Motor neuron (in vitro differentiated cells): ENCODE measurements at regions of chr12 and their contacts with region 1.

Region 1: DNA sequence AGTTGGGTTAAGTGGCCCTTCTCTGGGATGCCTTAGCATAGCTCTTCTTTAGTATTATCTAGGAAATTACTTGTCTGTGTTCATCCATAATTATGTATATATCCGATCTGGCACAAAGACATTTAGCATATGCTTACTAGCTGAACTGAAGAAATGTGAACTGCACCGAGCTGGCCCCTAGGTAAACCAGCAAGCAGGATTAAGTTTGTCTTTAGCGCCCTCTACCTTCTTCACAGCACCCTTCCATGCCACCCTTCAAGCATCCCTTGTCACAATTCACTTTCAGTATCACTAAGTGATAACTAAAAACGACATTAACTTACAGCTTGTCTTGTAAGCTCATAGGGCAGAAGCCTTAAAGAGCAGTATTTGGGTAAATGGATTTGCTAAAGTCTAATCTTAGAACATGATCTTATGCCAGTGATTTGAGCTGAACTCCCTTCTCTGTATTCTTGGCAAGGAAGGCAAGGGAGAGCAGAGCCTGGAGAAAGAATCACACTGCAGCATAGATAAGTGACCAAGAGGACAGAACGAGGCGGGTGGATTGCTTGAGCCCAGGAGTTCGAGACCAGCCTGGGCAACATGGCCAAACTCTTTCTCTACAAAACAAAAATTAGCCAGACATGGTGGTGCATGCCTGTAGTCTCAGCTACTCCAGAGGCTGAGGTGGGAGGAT is 2.6 kb upstream of the HAL start:
- ATAC-seq: peak; percentile 86 to 99 (median 94)
- H3K4me3 ChIP-seq: no peak overlapping the region
- H3K27ac ChIP-seq: no peak overlapping the region
- H3K4me1 ChIP-seq: no peaks in the 10 kb centered on the region

Region 2: DNA sequence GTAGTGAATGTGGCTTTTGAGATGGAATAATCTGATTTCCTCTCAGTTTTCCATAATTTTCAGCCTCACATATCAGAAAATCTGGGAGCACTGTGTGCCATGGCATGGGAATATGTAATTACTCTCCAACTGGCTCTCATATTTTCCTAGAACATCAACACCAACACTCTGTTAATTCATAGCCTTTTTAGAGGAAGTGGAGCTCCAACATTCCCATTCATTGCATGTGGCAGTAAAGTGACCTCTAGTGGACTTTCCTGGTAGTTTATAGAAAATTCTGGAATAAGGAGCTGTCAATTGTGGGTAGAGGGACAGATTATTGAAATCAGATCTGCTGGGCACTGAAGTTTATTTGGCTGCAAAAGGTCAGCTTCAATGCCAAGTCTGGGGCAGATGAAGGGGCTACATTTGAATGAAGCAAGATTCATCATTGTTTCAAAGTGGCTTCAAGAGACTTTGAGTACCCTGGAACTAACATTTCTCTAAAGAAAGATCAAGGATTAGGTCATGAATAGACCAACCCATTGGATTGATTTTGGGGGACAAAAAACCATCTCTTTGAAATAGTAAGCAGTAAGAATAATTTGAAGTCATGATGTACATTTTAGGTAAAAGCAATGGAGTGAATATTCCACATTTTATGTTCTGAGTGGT is 423.8 kb before region 1 on chr12:
- in situ Hi-C with region 1: loop called in 1 of 9 experiments (anchors 25 kb)
- ATAC-seq: peak in 4 of 8 experiments; percentile 32 to 82 (median 72)
- H3K4me3 ChIP-seq: no peak overlapping the region
- H3K27ac ChIP-seq: no peak overlapping the region
- H3K4me1 ChIP-seq: peaks cover 5 to 10% of the 10 kb centered on the region in 2 donors

Region 3: GRCh38 chr12:95623585-95624042 is 375.1 kb before region 1 on chr12:
- in situ Hi-C with region 1: loop called in 1 of 9 experiments (anchors 25 kb)
- ATAC-seq: peak in 4 of 8 experiments; percentile 48 to 99 (median 96)
- H3K4me3 ChIP-seq: no peak overlapping the region
- H3K27ac ChIP-seq: no peak overlapping the region
- H3K4me1 ChIP-seq: peaks cover 5 to 11% of the 10 kb centered on the region in 2 donors